Tibial artery (tissue), 4 donors: ENCODE measurements at regions of chr17 and their contacts with region 1.

Region 1: DNA sequence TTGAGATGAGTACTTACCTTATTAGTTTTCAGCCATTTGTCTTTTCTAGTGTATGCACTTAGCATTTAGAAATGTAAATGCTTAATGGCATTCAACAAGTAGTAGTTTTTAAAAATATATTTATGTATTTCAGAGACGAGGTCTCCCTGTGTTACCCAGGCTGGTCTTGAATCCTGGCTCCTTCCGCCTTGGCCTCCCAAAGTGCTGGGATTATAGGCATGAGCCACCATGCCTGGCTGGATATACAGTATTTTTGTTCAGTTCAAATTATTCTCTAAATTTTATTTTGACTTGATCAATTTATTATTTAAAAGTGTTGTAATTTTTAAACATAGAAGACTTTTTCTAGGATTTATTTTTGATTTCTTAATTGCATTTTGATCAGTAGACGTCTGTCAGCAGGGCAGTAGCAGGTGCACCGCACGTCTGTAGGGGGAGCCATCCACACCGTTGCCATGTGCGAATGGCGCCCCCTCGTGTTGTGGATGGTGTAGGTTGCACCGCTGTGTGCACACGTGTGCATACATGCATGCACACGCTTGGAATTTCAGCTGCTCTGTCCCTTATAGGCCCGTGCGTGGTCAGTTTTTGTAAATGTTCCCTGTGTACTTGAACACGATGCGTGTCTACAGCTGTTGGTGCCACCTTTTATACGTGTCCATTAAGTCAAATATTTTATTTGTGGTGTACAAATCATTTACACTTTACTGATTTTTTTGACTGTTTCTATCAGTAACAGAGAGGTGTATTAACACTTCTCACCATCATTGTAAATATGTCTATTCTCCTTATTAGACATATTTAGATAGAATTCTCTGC is 30.6 kb downstream of the RPTOR start:
- DNase-seq: peak; percentile 73 to 78
- H3K4me3 ChIP-seq: no peak overlapping the region
- H3K27ac ChIP-seq: no peak overlapping the region
- H3K4me1 ChIP-seq: peaks cover 0 to 8% (median 0%) of the 10 kb centered on the region in 4 donors
- H3K27me3 ChIP-seq: no peaks in the 10 kb centered on the region
- CTCF ChIP-seq: peak; percentile 76 to 84

Region 2: GRCh38 chr17:80970044-80970761 is 394.9 kb after region 1 on chr17:
- intact Hi-C with region 1: loop called (anchors 10 kb)
- DNase-seq: no peak
- H3K4me3 ChIP-seq: no peak overlapping the region
- H3K27ac ChIP-seq: peak overlapping the region in 1 of 2 donors; percentile 72
- H3K4me1 ChIP-seq: peaks cover 6 to 34% (median 27%) of the 10 kb centered on the region in 4 donors
- H3K27me3 ChIP-seq: peaks cover 0 to 26% of the 10 kb centered on the region in 2 donors
- CTCF ChIP-seq: peak; percentile 59 to 70